AG04450 (cell line): ENCODE measurements at regions of chr12 and their contacts with region 1.

Region 1: DNA sequence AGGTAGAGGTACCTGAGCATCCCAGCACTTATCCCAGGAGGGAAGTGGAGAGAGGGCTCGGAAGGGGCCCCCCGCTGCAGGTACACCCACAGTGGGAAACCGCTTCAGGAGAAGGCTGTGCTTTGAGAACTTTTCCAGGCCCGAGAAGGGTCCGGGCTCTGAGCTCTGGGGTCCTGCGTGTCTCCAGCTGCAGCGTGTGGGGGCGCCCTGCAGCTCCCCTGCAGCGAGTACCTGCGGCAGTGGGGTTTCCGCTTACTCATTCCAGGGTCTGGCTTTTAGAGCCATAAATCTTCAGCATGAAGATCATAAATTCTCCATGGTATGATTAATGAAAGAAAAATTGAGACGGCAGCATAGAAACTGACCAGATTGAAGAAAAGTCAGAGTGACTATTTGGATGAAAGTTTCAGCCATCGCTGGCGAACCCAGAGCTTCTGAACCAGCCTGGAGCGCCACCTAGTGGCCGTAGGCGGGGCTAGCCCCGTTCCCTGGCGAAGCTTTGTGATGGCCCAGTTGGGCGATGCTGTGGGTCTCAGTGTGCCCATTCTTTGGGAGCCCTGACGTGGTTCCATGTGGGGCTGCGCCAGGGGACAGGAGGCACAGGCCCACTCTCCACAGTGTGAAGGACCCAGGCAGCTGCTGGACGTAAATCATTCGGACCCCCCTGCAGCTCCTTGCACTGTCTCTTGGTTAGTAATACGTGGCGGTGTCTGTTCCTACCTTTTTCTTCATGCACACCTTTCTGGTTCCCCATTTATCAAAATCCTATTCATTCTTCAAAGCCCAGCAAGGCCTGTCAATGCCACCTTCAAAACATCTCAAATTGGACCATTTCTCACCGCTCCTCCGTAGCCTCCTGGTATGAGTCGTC is 198.2 kb downstream of the TSPAN9 start:
- DNase-seq: peak; percentile 36
- H3K4me3 ChIP-seq: no peak overlapping the region
- H3K27ac ChIP-seq: no peak overlapping the region
- H3K27me3 ChIP-seq: no peaks in the 10 kb centered on the region
- CTCF ChIP-seq: peak; percentile 98

Region 2: GRCh38 chr12:3060778-3061458 is 214.5 kb before region 1 on chr12:
- CTCF ChIA-PET with region 1: interaction called, 3 read pairs
- POLR2A ChIA-PET with region 1: interaction called, 11 read pairs
- DNase-seq: no peak
- H3K4me3 ChIP-seq: no peak overlapping the region
- H3K27ac ChIP-seq: no peak overlapping the region
- H3K27me3 ChIP-seq: peaks cover 22% of the 10 kb centered on the region
- CTCF ChIP-seq: no peak

Region 3: GRCh38 chr12:3122835-3123678 is 152.3 kb before region 1 on chr12:
- CTCF ChIA-PET with region 1: interaction called, 10 read pairs
- POLR2A ChIA-PET with region 1: no interaction called
- DNase-seq: no peak
- H3K4me3 ChIP-seq: no peak overlapping the region
- H3K27ac ChIP-seq: peak overlapping the region; percentile 73
- H3K27me3 ChIP-seq: no peaks in the 10 kb centered on the region
- CTCF ChIP-seq: peak; percentile 33

Region 4: GRCh38 chr12:3135522-3136461 is 139.6 kb before region 1 on chr12:
- CTCF ChIA-PET with region 1: interaction called, 172 read pairs
- POLR2A ChIA-PET with region 1: interaction called, 5 read pairs
- DNase-seq: peak; percentile 66
- H3K4me3 ChIP-seq: no peak overlapping the region
- H3K27ac ChIP-seq: no peak overlapping the region
- H3K27me3 ChIP-seq: no peaks in the 10 kb centered on the region
- CTCF ChIP-seq: peak; percentile 78

Region 5: DNA sequence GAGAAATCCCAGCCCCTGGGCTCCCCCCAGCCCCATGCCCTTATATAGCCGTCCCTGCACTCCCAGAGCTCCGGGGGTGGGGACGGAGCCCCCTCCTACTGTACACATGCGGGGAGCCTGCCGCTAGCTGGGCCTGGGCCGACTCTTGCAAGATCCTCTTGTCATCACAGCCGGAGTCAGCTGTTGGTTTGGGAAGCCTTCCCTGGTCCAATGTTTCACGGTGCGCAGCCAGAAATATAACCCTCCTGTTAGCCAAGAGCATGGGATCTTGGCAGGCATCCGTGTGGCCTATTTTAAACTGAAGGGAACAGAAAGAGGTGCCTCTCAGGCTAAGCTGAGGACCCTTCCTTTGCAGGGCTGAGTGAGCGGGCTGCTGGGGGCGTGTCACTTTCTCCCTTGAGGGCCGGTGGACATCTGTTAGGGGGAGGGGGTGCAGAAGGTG is 22.9 kb before region 1 on chr12:
- CTCF ChIA-PET with region 1: interaction called, 16 read pairs
- POLR2A ChIA-PET with region 1: no interaction called
- DNase-seq: peak; percentile 65
- H3K4me3 ChIP-seq: no peak overlapping the region
- H3K27ac ChIP-seq: peak overlapping the region; percentile 39
- H3K27me3 ChIP-seq: no peaks in the 10 kb centered on the region
- CTCF ChIP-seq: no peak

Region 6: DNA sequence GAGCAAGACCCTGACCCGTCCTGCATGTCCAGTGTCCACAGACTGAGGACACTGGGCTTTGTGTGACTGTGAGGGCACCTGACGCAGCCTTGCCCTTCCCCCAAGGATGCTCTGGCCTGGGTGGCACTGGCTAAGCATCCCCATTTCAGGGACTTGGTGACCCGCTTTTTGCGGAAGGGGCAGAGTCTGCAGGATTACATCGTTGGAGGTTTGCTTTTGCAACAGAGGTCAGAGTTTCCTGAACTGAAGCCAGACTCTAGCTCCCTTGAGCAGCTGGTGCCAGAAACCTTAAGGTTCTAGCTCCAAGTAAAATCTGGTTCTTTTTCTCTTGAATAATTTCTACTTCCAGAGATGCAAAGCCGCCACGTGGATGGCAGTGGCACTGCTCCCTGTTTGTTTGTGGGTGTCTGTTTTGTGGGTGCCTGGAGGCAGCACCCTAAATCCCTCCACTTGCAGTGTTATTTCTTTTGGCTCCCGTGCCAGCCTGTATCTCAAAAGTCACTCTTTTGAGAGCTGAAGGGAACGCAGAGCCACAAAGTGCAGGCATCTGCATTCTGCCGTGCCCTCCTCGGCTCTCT is 13.5 kb before region 1 on chr12:
- CTCF ChIA-PET with region 1: interaction called, 11 read pairs
- POLR2A ChIA-PET with region 1: no interaction called
- DNase-seq: no peak
- H3K4me3 ChIP-seq: no peak overlapping the region
- H3K27ac ChIP-seq: peak overlapping the region; percentile 21
- H3K27me3 ChIP-seq: no peaks in the 10 kb centered on the region
- CTCF ChIP-seq: peak; percentile 47

Region 7: DNA sequence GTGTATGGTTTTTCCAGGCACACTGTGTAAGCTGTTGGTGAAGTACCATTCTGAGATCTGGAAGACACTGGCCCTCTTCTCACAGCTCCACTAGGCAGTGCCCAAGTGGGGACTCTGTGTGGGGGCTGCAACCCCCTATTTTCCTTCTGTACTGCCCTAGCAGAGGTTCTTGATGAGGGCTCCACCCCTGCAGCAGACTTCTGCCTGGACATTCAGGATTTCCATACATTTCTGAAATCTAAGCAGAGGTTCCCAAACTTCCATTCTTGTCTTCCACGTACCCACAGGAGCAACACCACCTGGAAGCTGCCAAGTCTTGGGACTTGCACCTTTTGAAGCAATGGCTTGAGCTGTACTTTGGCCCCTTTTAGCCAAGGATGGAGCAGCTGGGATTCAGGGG is 130.4 kb after region 1 on chr12:
- CTCF ChIA-PET with region 1: no interaction called
- POLR2A ChIA-PET with region 1: no interaction called
- DNase-seq: no peak
- H3K4me3 ChIP-seq: no peak overlapping the region
- H3K27ac ChIP-seq: no peak overlapping the region
- H3K27me3 ChIP-seq: no peaks in the 10 kb centered on the region
- CTCF ChIP-seq: no peak